HEK293 (cell line): ENCODE measurements at regions of chr22 and their contacts with region 1.

Region 1: DNA sequence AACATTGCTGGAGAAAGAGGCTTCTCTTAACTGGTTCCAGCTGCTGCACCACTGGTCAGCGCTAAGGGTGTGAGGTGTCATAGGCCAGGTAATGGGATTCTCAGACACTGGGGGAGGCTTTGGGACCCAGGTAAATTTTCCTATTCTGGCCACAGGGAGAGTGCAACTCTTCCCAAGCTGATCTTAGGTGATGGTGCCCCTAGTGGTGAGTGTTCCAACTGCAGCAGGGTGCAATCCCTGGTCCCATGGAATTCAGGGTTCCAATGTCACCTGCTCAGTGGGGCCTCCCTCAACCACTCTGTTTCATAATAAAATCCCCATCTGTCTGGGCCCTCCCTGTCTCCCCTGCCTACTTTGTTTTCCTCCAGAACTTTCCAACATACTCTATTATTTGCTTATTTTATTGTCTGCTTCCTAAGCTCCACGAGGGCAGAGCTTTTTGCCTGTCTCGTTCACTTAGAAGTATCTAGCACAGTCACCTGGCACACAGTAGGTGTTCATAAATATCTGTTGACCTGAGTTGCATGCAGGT is 2.9 kb upstream of the SGSM1 start:
- H3K4me3 ChIP-seq: no peak overlapping the region
- H3K27ac ChIP-seq: no peak overlapping the region
- H3K4me1 ChIP-seq: no peaks in the 10 kb centered on the region
- CTCF ChIP-seq: peak; percentile 82

Region 2: DNA sequence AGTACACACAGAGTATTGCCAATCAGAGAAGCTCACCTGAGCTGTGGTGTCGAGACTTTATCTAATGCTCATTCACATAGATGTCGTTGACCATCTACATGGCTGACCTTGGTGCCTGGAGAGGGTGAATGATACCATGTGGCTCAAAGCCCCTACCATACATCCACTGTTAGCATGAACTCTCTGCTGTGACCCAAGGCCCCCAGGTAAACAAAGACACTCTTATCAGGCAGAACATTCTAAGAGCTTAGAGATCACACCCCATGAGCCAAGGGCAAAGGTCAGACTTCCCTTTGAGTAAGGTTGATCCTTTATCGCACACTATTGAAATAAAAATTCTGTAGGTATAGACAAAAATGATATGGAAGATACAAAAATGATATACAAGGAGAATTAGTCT is 13.6 kb before region 1 on chr22:
- CTCF ChIA-PET with region 1: interaction called, 40 read pairs
- POLR2A ChIA-PET with region 1: no interaction called
- H3K4me3 ChIP-seq: no peak overlapping the region
- H3K27ac ChIP-seq: no peak overlapping the region
- H3K4me1 ChIP-seq: no peaks in the 10 kb centered on the region
- CTCF ChIP-seq: no peak

Region 3: DNA sequence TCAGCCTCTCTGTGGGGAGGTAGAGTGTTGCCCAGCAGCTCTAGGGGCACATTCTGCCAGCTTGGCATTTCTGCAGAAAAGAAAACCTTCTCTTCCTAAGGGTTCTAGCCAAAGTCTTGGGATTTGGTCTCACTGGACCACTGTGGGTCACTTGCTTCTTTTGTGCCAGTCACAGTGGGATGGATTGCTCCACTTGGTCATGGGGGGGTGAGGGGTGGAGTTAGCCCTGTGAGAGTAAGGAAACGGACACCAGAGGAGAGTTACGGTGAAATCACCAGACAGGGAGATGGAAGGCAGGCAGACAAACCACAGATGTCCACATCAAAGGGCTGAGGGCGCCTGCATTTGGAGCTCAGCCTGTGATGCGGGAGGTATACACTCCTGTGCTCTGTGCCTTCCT is 13.7 kb after region 1 on chr22:
- CTCF ChIA-PET with region 1: interaction called, 32 read pairs
- POLR2A ChIA-PET with region 1: no interaction called
- H3K4me3 ChIP-seq: no peak overlapping the region
- H3K27ac ChIP-seq: no peak overlapping the region
- H3K4me1 ChIP-seq: no peaks in the 10 kb centered on the region
- CTCF ChIP-seq: no peak

Region 4: DNA sequence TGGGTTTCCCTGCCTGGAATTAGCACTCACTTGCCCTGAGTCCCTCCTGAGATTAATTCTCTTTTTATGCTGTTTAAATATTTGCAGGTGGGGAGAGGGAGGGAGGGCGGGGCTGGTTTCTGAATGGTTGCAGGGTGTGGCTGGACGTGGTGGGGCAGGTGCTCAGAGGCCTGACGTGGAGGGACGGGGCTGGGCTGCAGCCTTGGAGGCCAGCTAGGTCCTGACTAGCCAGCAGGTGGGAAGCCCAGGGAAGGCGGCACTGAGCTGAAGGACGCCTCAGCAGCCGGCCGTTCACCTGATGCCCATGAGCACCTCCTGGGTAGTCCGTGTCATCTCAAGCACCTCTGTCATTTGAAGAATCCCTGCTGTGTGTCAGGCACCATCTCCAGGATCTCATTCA is 24.2 kb after region 1 on chr22:
- CTCF ChIA-PET with region 1: interaction called, 12 read pairs
- POLR2A ChIA-PET with region 1: no interaction called
- H3K4me3 ChIP-seq: no peak overlapping the region
- H3K27ac ChIP-seq: no peak overlapping the region
- H3K4me1 ChIP-seq: no peaks in the 10 kb centered on the region
- CTCF ChIP-seq: no peak